ENCODE measurements at regions of chr4 and their contacts with region 1.

Region 1: GRCh38 chr4:40629401-40630334 is at the start of gene RBM47:
- DNase-seq: peak; percentile 86
- ATAC-seq: peak; percentile 78
- H3K4me3 ChIP-seq: peak within 1 kb of the TSS; percentile 87
- H3K27ac ChIP-seq: peak within 1 kb of the TSS; percentile 100
- H3K4me1 ChIP-seq: peaks cover 33% of the 10 kb centered on the region
- H3K27me3 ChIP-seq: no peaks in the 10 kb centered on the region
- CTCF ChIP-seq: no peak; the same call in 1 of the 2 replicates
- total RNA-seq, gene RBM47: 34.7 and 47.6 TPM in 2 replicates

Region 2: DNA sequence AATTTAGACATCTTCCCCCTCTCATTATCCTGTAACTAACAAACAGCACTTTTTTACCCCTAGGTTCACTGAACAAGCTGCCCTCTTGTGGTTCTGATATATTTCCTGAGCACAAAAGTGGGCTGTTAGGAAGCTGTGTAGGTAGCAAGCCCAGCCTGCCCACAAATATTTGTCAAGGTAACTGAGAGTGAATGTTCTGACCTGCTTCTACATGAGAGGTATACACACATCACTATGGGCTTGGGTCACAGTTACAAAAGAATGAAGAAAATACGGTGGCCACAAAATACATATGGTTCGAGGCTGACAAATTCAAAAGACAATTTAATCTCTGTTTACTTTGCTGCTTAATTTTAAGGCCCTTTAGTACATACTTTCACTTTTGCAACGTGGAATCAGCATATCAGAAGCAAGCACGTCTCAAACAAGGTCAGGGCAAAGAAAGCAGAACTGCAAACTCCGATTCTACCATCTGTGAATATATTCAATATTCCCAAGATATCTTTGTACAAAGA is 78.7 kb before region 1 on chr4:
- CTCF ChIA-PET with region 1: no interaction called
- POLR2A ChIA-PET with region 1: no interaction called
- intact Hi-C with region 1: loop called (anchors 1 kb)
- DNase-seq: peak; percentile 53
- ATAC-seq: peak; percentile 60
- H3K4me3 ChIP-seq: peak overlapping the region; percentile 35; the same call in 1 of the 2 replicates
- H3K27ac ChIP-seq: peak overlapping the region; percentile 56
- H3K4me1 ChIP-seq: peaks cover 21% of the 10 kb centered on the region
- H3K27me3 ChIP-seq: no peaks in the 10 kb centered on the region
- CTCF ChIP-seq: peak; percentile 59

Region 3: DNA sequence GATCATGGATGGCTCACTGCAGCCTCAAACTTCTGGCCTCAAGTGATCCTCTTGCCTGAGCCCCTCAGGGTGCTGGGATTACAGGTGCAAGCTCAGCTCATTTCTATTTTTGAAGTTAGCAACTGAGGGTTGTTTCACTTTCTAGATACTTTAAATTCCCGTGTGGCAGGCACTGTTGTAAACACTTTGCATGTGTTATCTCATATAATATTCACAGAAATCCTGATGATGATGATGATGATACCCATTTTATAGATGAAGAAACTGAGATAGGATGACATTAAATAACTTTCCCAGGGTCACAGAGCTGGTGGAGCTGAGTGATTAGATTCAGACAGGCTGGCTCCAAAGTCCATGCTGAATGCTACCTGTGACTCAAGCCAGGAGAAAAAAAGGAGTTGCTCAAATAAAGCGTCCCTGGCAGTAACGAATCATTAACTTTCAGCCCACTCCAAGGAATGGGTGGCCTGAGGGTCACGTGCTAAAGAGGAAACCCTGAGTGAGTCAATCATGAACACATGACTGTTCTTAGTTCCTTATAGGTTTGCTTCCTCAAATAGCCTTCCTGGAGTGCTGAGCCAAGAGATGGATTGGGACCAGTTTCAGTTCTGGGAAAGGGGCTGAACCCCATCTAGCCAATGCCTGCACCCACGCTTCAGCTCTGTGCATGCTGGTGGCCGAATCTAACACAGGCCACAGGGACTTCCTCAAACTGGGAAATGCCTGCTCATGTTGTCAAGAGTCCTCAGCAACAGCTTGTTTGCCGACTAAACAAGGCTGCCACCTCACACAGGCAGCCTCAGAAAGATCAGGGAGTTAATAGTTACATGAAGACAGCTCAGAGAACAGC is 52.8 kb before region 1 on chr4:
- CTCF ChIA-PET with region 1: no interaction called
- POLR2A ChIA-PET with region 1: no interaction called
- intact Hi-C with region 1: loop called (anchors 10 kb)
- DNase-seq: peak; percentile 88
- ATAC-seq: peak; percentile 86
- H3K4me3 ChIP-seq: peak overlapping the region; percentile 39; the same call in 1 of the 2 replicates
- H3K27ac ChIP-seq: peak overlapping the region; percentile 83
- H3K4me1 ChIP-seq: peaks cover 16% of the 10 kb centered on the region
- H3K27me3 ChIP-seq: no peaks in the 10 kb centered on the region
- CTCF ChIP-seq: no peak

Region 4: GRCh38 chr4:40601641-40602040 is 28.0 kb before region 1 on chr4:
- CTCF ChIA-PET with region 1: no interaction called
- POLR2A ChIA-PET with region 1: no interaction called
- intact Hi-C with region 1: no loop called
- DNase-seq: no peak
- ATAC-seq: no peak
- H3K4me3 ChIP-seq: no peak overlapping the region
- H3K27ac ChIP-seq: no peak overlapping the region
- H3K4me1 ChIP-seq: peaks cover 9% of the 10 kb centered on the region; the same call in 1 of the 2 replicates
- H3K27me3 ChIP-seq: no peaks in the 10 kb centered on the region
- CTCF ChIP-seq: no peak

Region 5: GRCh38 chr4:40682290-40683101 is 52.8 kb after region 1 on chr4:
- CTCF ChIA-PET with region 1: no interaction called
- POLR2A ChIA-PET with region 1: no interaction called
- intact Hi-C with region 1: no loop called
- DNase-seq: no peak
- ATAC-seq: no peak
- H3K4me3 ChIP-seq: no peak overlapping the region
- H3K27ac ChIP-seq: no peak overlapping the region
- H3K4me1 ChIP-seq: no peaks in the 10 kb centered on the region
- H3K27me3 ChIP-seq: no peaks in the 10 kb centered on the region
- CTCF ChIP-seq: no peak